CD4-positive, alpha-beta T cell (primary cell): ENCODE measurements at regions of chr9 and their contacts with region 1.

Region 1: DNA sequence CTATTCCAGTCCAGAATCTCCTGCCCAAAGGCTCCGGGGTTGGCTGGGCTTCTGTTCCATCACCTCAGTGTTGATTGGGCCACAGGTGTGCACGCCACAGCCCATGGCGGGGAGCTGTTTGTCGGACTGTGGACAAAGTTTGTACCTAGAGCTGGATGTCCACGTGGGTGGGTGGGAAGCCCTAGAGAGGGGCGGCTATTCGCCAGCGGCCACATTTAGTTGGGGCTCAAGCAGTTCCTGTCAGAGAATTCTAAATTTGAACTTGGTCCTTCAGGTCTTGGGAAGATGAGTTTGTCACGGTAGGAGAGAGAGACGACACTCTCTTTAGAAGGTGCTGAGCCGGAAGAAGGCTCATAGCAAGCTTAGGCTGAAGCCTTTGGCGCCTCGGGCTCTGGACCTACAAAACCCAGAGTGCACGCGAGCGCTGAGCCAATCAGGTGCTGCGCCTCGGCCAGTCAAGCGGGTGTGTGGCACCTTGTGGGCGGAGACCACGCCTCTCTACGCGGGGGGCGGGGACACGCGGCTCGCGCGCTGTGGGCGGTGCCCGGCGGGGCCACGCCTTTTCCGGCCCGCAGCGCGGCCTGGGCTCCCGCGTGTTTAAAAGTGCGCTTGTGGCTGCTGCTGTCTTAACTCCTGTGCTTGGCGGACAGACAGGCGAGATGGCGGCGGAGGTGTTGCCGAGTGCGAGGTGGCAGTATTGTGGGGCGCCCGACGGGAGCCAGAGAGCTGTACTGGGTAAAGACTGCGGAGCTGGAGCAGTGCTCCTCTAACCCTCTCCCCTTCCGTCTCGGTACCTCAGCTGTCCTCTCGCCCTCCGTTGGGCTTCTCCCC is at the start of gene POLR1E:
- DNase-seq: peak; percentile 91 to 98 (median 96)
- ATAC-seq: peak; percentile 97
- H3K4me3 ChIP-seq: peak within 1 kb of the TSS; percentile 89
- H3K4me3 Mint-ChIP-seq: peak within 1 kb of the TSS; percentile 94
- H3K27ac ChIP-seq: peak within 1 kb of the TSS; percentile 67 to 74
- H3K27ac Mint-ChIP-seq: peak within 1 kb of the TSS; percentile 92
- H3K4me1 ChIP-seq: peaks cover 29% of the 10 kb centered on the region
- H3K4me1 Mint-ChIP-seq: peaks cover 47% of the 10 kb centered on the region
- H3K27me3 ChIP-seq: peaks cover 0 to 3% of the 10 kb centered on the region in 2 experiments
- H3K27me3 Mint-ChIP-seq: peaks cover 8% of the 10 kb centered on the region
- CTCF ChIP-seq: no peak
- total RNA-seq, gene POLR1E: 28.9 to 29.7 TPM

Region 2: DNA sequence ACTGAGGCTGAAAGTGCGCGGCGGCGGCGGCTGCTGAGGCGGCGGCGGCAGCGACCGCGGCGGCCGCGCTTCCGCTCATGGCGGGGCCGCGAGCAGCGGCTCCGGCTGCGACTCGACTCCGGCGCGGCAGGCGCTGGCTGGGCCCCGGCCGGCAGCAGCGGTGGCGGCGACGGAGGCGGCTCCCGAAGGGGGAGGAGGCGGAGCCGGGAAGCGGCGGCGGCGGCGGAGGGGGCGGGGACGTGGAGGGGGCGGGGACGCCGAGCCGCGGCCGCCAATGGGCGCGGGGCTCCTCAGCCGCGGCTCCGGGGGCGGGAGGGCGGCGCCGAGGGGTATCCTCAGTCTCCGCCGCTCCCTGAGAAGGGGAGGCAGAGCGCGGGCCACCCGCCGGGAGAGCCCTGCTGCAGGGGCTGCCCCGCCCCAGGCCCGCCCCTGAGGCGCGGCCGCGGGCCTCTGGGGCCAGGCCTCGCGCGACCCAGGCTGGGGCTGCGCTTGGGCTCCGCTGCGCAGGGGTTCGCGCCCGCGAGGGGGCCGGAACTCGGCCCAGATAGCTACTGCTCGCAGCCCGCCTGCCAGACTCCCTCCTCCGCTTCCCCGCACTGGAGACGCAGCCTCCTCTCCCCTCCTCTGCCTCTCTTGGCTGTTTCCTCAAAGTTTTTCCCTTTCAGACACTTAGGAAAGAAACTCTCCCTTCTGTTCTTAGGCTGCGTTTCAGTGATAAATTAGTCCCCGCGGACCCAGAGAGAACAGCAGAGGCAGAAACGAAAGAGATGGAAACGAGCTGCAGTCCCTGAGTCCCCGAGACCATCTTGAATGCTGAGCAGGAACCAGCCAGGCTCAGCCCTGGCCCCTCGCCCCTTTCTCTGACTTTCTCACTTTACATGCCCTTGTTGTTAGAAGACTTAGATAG is 997.9 kb before region 1 on chr9:
- CTCF ChIA-PET with region 1: no interaction called
- POLR2A ChIA-PET with region 1: no interaction called
- intact Hi-C with region 1: loop called in 1 of 2 experiments (anchors 10 kb)
- DNase-seq: peak; percentile 75 to 97 (median 90)
- ATAC-seq: peak; percentile 84
- H3K4me3 ChIP-seq: peak overlapping the region; percentile 75
- H3K4me3 Mint-ChIP-seq: peak overlapping the region; percentile 94
- H3K27ac ChIP-seq: peak overlapping the region; percentile 84 to 87
- H3K27ac Mint-ChIP-seq: peak overlapping the region; percentile 97
- H3K4me1 ChIP-seq: peaks cover 42% of the 10 kb centered on the region
- H3K4me1 Mint-ChIP-seq: peaks cover 67% of the 10 kb centered on the region
- H3K27me3 ChIP-seq: no peaks in the 10 kb centered on the region
- H3K27me3 Mint-ChIP-seq: no peaks in the 10 kb centered on the region
- CTCF ChIP-seq: no peak

Region 3: GRCh38 chr9:37027582-37028419 is 457.8 kb before region 1 on chr9:
- CTCF ChIA-PET with region 1: no interaction called
- POLR2A ChIA-PET with region 1: no interaction called
- intact Hi-C with region 1: loop called in 1 of 2 experiments (anchors 5 kb)
- DNase-seq: peak; percentile 62 to 92 (median 77)
- ATAC-seq: peak; percentile 96
- H3K4me3 ChIP-seq: peak overlapping the region; percentile 38
- H3K4me3 Mint-ChIP-seq: peak overlapping the region; percentile 54
- H3K27ac ChIP-seq: no peak overlapping the region
- H3K27ac Mint-ChIP-seq: no peak overlapping the region
- H3K4me1 ChIP-seq: peaks cover 61% of the 10 kb centered on the region
- H3K4me1 Mint-ChIP-seq: peaks cover 38% of the 10 kb centered on the region
- H3K27me3 ChIP-seq: peaks cover 96% of the 10 kb centered on the region in 2 experiments
- H3K27me3 Mint-ChIP-seq: peaks cover 94% of the 10 kb centered on the region
- CTCF ChIP-seq: no peak

Region 4: DNA sequence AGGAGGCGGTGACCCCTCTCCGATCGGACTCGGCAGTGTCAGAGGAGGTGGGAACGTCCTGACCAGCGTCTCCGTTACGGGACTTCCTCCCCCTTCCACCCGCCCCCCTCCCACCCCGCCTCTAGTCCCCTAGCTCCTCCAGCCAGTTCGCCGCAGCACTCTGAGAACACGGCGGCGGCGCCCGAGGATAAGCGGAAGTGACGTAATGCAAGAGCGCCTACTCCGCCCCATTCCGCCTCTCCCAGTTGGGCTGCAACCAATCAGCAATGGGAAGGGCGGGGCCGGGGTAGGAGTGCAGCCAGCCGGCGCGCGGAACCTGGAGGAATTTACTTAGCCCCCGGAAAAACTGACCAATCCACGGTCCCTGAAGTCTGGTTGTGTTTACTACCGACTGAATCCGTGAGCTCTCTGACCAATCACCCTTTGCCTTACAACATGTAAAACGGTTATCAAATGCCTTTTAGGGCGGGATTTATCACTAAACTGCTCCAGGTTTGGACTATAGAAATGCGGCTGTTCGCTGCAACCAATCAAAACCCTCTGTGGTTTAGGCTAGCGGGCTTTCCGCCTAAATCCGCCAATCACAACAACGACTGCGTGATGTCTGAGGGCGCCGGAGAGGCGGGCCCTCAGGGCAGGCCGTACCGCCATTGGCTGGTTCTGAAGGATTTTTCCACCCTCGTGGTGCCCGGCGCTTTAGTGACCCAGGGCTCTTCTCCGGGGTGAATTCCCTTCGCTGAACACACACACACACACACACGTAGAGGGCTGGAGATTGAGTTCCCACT is 20.2 kb before region 1 on chr9 and contains the start of gene ZBTB5:
- CTCF ChIA-PET with region 1: interaction called, 3 read pairs
- POLR2A ChIA-PET with region 1: interaction called, 52 read pairs
- intact Hi-C with region 1: loop called (anchors 1 kb)
- DNase-seq: peak; percentile 97 to 100 (median 98)
- ATAC-seq: peak; percentile 80
- H3K4me3 ChIP-seq: peak within 1 kb of the TSS; percentile 96
- H3K4me3 Mint-ChIP-seq: peak within 1 kb of the TSS; percentile 91
- H3K27ac ChIP-seq: peak within 1 kb of the TSS; percentile 90 to 95
- H3K27ac Mint-ChIP-seq: peak within 1 kb of the TSS; percentile 92
- H3K4me1 ChIP-seq: peaks cover 31% of the 10 kb centered on the region
- H3K4me1 Mint-ChIP-seq: peaks cover 40% of the 10 kb centered on the region
- H3K27me3 ChIP-seq: no peaks in the 10 kb centered on the region
- H3K27me3 Mint-ChIP-seq: no peaks in the 10 kb centered on the region
- CTCF ChIP-seq: no peak
- total RNA-seq, gene ZBTB5: 21.3 to 22.0 TPM

Region 5: GRCh38 chr9:37592108-37592951 is 106.7 kb after region 1 on chr9 and contains the start of gene TOMM5:
- CTCF ChIA-PET with region 1: no interaction called
- POLR2A ChIA-PET with region 1: interaction called, 11 read pairs
- intact Hi-C with region 1: loop called in 1 of 2 experiments (anchors 5 kb)
- DNase-seq: peak; percentile 83 to 95 (median 86)
- ATAC-seq: peak; percentile 94
- H3K4me3 ChIP-seq: peak within 1 kb of the TSS; percentile 100
- H3K4me3 Mint-ChIP-seq: peak within 1 kb of the TSS; percentile 99
- H3K27ac ChIP-seq: peak within 1 kb of the TSS in 1 of 2 donors; percentile 64
- H3K27ac Mint-ChIP-seq: peak within 1 kb of the TSS; percentile 92
- H3K4me1 ChIP-seq: peaks cover 33% of the 10 kb centered on the region
- H3K4me1 Mint-ChIP-seq: peaks cover 50% of the 10 kb centered on the region
- H3K27me3 ChIP-seq: peaks cover 7% of the 10 kb centered on the region in 2 experiments
- H3K27me3 Mint-ChIP-seq: peaks cover 12% of the 10 kb centered on the region
- CTCF ChIP-seq: no peak
- total RNA-seq, gene TOMM5: 31.4 to 35.3 TPM

Region 6: GRCh38 chr9:37800631-37801286 is 315.2 kb after region 1 on chr9 and contains the start of gene DCAF10:
- CTCF ChIA-PET with region 1: no interaction called
- POLR2A ChIA-PET with region 1: no interaction called
- intact Hi-C with region 1: loop called in 1 of 2 experiments (anchors 5 kb)
- DNase-seq: peak; percentile 77 to 93 (median 86)
- ATAC-seq: peak; percentile 82
- H3K4me3 ChIP-seq: peak within 1 kb of the TSS; percentile 93
- H3K4me3 Mint-ChIP-seq: peak within 1 kb of the TSS; percentile 95
- H3K27ac ChIP-seq: peak within 1 kb of the TSS; percentile 60 to 70
- H3K27ac Mint-ChIP-seq: peak within 1 kb of the TSS; percentile 83
- H3K4me1 ChIP-seq: peaks cover 24% of the 10 kb centered on the region
- H3K4me1 Mint-ChIP-seq: peaks cover 43% of the 10 kb centered on the region
- H3K27me3 ChIP-seq: no peaks in the 10 kb centered on the region
- H3K27me3 Mint-ChIP-seq: no peaks in the 10 kb centered on the region
- CTCF ChIP-seq: no peak
- total RNA-seq, gene DCAF10: 7.2 to 7.5 TPM

Region 7: GRCh38 chr9:37913480-37914153 is 428.0 kb after region 1 on chr9:
- CTCF ChIA-PET with region 1: no interaction called
- POLR2A ChIA-PET with region 1: no interaction called
- intact Hi-C with region 1: loop called in 1 of 2 experiments (anchors 5 kb)
- DNase-seq: peak; percentile 58 to 85 (median 76)
- ATAC-seq: peak; percentile 90
- H3K4me3 ChIP-seq: no peak overlapping the region
- H3K4me3 Mint-ChIP-seq: no peak overlapping the region
- H3K27ac ChIP-seq: no peak overlapping the region
- H3K27ac Mint-ChIP-seq: no peak overlapping the region
- H3K4me1 ChIP-seq: no peaks in the 10 kb centered on the region
- H3K4me1 Mint-ChIP-seq: no peaks in the 10 kb centered on the region
- H3K27me3 ChIP-seq: no peaks in the 10 kb centered on the region
- H3K27me3 Mint-ChIP-seq: peaks cover 5% of the 10 kb centered on the region
- CTCF ChIP-seq: peak; percentile 95